MCF 10A (cell line): ENCODE measurements at regions of chr15 and their contacts with region 1.

Region 1: DNA sequence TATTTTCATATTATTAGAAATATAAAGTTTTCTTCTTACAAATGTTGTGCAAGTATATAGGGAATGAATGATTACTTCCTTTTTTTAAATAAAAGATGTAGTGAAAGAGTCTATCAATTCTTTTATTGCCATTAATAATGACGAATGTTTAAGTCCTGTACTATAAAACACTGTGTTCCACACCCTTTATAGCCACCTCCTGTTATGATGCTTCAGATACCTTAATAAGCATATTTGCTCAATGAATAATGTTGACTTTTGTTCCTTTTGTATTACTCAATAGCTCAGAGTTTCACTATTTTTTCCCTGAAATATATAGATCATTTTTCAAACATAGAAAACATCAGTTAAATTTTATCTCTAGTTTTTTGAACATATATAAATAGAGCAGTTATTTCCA is 378.2 kb upstream of the THBS1 start:
- DNase-seq: peak; percentile 43
- H3K4me3 Mint-ChIP-seq: no peak overlapping the region
- H3K27ac Mint-ChIP-seq: peak overlapping the region; percentile 93
- H3K4me1 Mint-ChIP-seq: peaks cover 54% of the 10 kb centered on the region
- H3K27me3 Mint-ChIP-seq: no peaks in the 10 kb centered on the region
- CTCF ChIP-seq: no peak

Region 2: DNA sequence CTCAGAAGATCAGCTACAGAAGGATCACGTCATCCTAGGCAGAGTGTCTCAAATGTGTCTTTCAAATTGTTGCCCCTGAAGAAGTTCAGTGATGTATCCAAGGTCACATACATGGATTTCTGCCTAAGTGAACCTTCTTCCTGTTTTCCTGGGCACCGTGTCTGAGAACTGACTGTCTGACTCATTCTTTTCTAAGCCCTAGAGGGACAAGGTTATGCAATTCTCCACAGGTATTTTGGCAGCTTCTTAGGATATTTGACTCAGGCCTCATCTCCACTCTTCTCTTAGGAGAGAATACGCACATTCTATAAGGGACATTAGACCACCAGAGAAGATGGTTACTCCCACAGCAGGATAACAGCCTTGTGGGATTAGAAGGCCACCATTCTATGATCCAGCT is 13.7 kb before region 1 on chr15:
- CTCF ChIA-PET with region 1: interaction called, 21 read pairs
- POLR2A ChIA-PET with region 1: interaction called, 27 read pairs
- intact Hi-C with region 1: no loop called
- DNase-seq: peak; percentile 97
- H3K4me3 Mint-ChIP-seq: peak overlapping the region; percentile 16
- H3K27ac Mint-ChIP-seq: peak overlapping the region; percentile 74
- H3K4me1 Mint-ChIP-seq: peaks cover 52% of the 10 kb centered on the region
- H3K27me3 Mint-ChIP-seq: no peaks in the 10 kb centered on the region
- CTCF ChIP-seq: no peak